ENCODE measurements at regions of chr1 and their contacts with region 1.

Region 1: GRCh38 chr1:206030714-206031113 is 7.0 kb upstream of the CTSE start:
- DNase-seq: peak; percentile 85
- H3K4me3 Mint-ChIP-seq: no peak overlapping the region
- H3K27ac Mint-ChIP-seq: no peak overlapping the region
- H3K4me1 Mint-ChIP-seq: peaks cover 23% of the 10 kb centered on the region
- H3K27me3 Mint-ChIP-seq: peaks cover 62% of the 10 kb centered on the region

Region 2: GRCh38 chr1:205919026-205919746 is 111.5 kb before region 1 on chr1:
- CTCF ChIA-PET with region 1: no interaction called
- DNase-seq: peak; percentile 84
- H3K4me3 Mint-ChIP-seq: no peak overlapping the region
- H3K27ac Mint-ChIP-seq: no peak overlapping the region
- H3K4me1 Mint-ChIP-seq: no peaks in the 10 kb centered on the region
- H3K27me3 Mint-ChIP-seq: peaks cover 22% of the 10 kb centered on the region

Region 3: GRCh38 chr1:205983925-205984725 is 46.6 kb before region 1 on chr1:
- CTCF ChIA-PET with region 1: interaction called, 23 read pairs
- DNase-seq: peak; percentile 47
- H3K4me3 Mint-ChIP-seq: no peak overlapping the region
- H3K27ac Mint-ChIP-seq: no peak overlapping the region
- H3K4me1 Mint-ChIP-seq: no peaks in the 10 kb centered on the region
- H3K27me3 Mint-ChIP-seq: peaks cover 2% of the 10 kb centered on the region

Region 4: GRCh38 chr1:206050655-206051235 is 20.0 kb after region 1 on chr1:
- CTCF ChIA-PET with region 1: interaction called, 12 read pairs
- DNase-seq: peak; percentile 66
- H3K4me3 Mint-ChIP-seq: no peak overlapping the region
- H3K27ac Mint-ChIP-seq: peak overlapping the region; percentile 91
- H3K4me1 Mint-ChIP-seq: peaks cover 46% of the 10 kb centered on the region
- H3K27me3 Mint-ChIP-seq: peaks cover 11% of the 10 kb centered on the region